GM12878 (cell line): ENCODE measurements at regions of chr1 and their contacts with region 1.

Region 1: GRCh38 chr1:74681449-74681848 is 7.9 kb upstream of the ERICH3 start:
- DNase-seq: peak; percentile 48
- ATAC-seq: peak; percentile 89
- H3K4me3 ChIP-seq: no peak overlapping the region
- H3K27ac ChIP-seq: no peak overlapping the region
- H3K4me1 ChIP-seq: peaks cover 13% of the 10 kb centered on the region
- H3K27me3 ChIP-seq: no peaks in the 10 kb centered on the region
- CTCF ChIP-seq: no peak
- EP300 ChIP-seq: 0 out of 4 replicates have a peak, but pooled peaks of 1 of the 2 experiments have one; percentile 26
- POLR2A ChIP-seq: no peak
- RAD21 ChIP-seq: no peak

Region 2: DNA sequence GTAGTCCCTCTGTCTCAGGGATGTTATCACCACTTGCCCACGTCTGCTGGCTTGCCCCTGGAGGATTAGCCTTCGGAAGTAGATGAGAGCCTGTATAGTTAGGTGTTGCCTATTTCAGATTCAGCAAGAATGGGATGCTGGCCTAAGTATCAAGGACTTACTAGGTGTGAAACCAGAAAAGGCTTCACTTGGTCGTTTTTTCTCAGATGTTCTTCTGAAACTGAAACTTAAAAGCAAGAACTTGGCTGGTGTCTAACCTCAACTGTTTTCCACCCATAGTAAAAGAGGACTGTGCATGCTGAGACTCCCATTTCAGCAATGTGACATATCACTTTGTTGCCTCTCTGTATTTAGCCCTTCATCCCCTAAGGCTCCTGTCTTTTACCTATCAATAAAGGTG is 102.0 kb before region 1 on chr1:
- CTCF ChIA-PET with region 1: no interaction called
- POLR2A ChIA-PET with region 1: no interaction called
- RAD21 ChIA-PET with region 1: no interaction called
- SMC1A ChIA-PET with region 1: no interaction called
- in situ Hi-C with region 1: no loop called
- intact Hi-C with region 1: loop called (anchors 5 kb)
- DNase-seq: peak; percentile 65
- ATAC-seq: peak; percentile 98
- H3K4me3 ChIP-seq: no peak overlapping the region
- H3K27ac ChIP-seq: no peak overlapping the region
- H3K4me1 ChIP-seq: peaks cover 6% of the 10 kb centered on the region; the same call in 1 of the 2 replicates
- H3K27me3 ChIP-seq: no peaks in the 10 kb centered on the region
- CTCF ChIP-seq: no peak
- EP300 ChIP-seq: no peak
- POLR2A ChIP-seq: no peak
- RAD21 ChIP-seq: no peak

Region 3: GRCh38 chr1:74895411-74895810 is 214.0 kb after region 1 on chr1:
- CTCF ChIA-PET with region 1: no interaction called
- POLR2A ChIA-PET with region 1: no interaction called
- RAD21 ChIA-PET with region 1: no interaction called
- SMC1A ChIA-PET with region 1: no interaction called
- in situ Hi-C with region 1: no loop called
- intact Hi-C with region 1: no loop called
- DNase-seq: no peak
- ATAC-seq: no peak
- H3K4me3 ChIP-seq: no peak overlapping the region
- H3K27ac ChIP-seq: no peak overlapping the region
- H3K4me1 ChIP-seq: no peaks in the 10 kb centered on the region
- H3K27me3 ChIP-seq: no peaks in the 10 kb centered on the region
- CTCF ChIP-seq: no peak
- EP300 ChIP-seq: no peak
- POLR2A ChIP-seq: no peak
- RAD21 ChIP-seq: no peak